A549 (cell line): ENCODE measurements at regions of chr3 and their contacts with region 1.

Region 1: DNA sequence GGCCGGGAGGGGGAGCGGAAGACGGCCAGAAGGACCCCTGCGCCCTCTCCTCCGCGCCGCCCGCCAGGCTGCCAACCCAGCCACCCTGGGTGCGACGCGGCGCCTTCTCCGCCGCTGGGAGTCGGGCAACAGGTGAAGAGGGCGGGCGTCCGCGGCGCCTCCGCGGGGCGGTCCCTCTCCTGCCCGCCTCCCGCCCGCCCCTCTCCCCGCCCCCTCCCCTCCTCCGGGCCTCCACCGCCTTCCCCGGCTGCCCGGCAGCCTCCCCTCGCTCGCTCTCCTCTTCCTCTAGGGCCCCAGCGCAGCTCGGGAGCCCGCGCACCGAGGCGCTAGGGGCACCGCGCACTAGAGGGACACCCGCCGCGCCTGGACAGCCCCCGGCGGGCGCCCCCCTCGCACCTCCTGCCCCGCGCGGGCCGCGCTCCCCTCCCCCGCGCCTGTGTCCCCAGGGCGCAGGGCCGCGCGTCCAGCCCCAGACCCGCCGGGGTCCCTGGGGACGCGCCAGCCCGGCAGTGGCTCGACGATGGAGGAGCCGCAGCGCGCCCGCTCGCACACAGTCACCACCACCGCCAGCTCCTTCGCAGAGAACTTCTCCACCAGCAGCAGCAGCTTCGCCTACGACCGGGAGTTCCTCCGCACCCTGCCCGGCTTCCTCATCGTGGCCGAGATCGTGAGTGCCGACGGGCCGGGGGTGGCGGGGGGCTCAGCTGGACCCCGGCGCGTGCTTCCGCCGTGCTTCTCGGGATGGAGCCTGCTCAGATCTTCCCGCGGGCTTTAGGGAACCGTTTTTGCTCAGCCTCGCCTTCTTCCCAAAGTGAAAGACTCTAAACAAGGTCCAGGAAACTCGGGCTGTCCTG is at the start of gene CMTM8:
- DNase-seq: peak; percentile 60 to 69
- ATAC-seq: peak; percentile 87 to 89
- H3K4me3 ChIP-seq: peak within 1 kb of the TSS; percentile 96
- H3K27ac ChIP-seq: peak within 1 kb of the TSS; percentile 83 to 88
- H3K4me1 ChIP-seq: peaks cover 11% of the 10 kb centered on the region
- CTCF ChIP-seq: no peak
- EP300 ChIP-seq: no peak
- POLR2A ChIP-seq: peak; percentile 34; the same call in 1 of the 2 replicates
- RAD21 ChIP-seq: no peak
- polyA plus RNA-seq, gene CMTM8: 15.6 and 16.1 TPM in 2 replicates

Region 2: GRCh38 chr3:32249184-32249782 is 10.6 kb after region 1 on chr3:
- CTCF ChIA-PET with region 1: interaction called, 10 read pairs
- POLR2A ChIA-PET with region 1: interaction called, 4 read pairs
- DNase-seq: peak in 1 of 2 experiments; percentile 58
- ATAC-seq: peak; percentile 62 to 63; a peak in 4 of 6 replicates
- H3K4me3 ChIP-seq: no peak overlapping the region
- H3K27ac ChIP-seq: peak overlapping the region; percentile 62 to 76
- H3K4me1 ChIP-seq: peaks cover 16% of the 10 kb centered on the region
- CTCF ChIP-seq: no peak
- EP300 ChIP-seq: no peak
- POLR2A ChIP-seq: no peak
- RAD21 ChIP-seq: no peak

Region 3: GRCh38 chr3:32913790-32914446 is 675.2 kb after region 1 on chr3:
- CTCF ChIA-PET with region 1: no interaction called
- POLR2A ChIA-PET with region 1: no interaction called
- DNase-seq: no peak
- ATAC-seq: peak in 1 of 2 experiments; percentile 54; a peak in 4 of 6 replicates
- H3K4me3 ChIP-seq: no peak overlapping the region
- H3K27ac ChIP-seq: no peak overlapping the region
- H3K4me1 ChIP-seq: no peaks in the 10 kb centered on the region
- CTCF ChIP-seq: no peak
- EP300 ChIP-seq: no peak
- POLR2A ChIP-seq: no peak
- RAD21 ChIP-seq: no peak